ENCODE measurements at regions of chr19 and their contacts with region 1.

Region 1: DNA sequence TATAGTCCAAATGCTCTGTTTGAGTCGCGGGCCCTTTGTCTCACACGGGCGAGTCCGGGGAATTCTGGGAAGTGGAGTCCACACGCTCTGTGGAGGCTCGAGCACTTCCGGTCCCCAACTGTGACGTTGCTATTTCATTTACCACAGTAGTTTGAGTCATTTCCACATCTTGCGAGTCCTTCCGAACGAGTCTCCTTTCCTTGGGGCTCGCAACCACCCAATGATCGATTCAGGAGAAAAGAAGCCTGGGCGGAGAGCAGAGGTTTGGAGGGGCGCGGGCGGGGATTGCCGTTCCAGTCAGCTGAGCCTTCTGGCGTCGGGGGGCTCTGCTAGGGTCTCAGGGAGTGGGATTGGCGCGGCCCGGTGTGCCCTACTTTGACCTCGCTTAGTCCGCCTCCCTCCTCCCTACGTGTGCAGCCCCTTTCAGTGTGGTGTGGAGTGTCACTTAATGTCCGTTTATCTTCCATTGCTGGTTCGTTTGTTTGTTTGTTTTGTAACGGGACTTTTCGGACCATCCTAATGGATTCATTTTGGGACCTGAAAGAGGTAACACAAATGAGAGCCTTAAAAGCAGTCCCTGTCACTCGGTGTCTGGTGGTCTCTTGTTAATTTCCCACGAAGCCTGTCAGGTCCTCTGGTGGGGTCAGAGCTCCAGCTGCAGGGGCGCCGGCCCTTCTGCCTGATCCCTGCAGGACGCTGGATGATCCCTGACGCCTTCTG is at the start of gene ZNF222:
- DNase-seq: peak; percentile 90
- ATAC-seq: peak; percentile 99
- H3K4me3 Mint-ChIP-seq: peak within 1 kb of the TSS; percentile 94
- H3K27ac Mint-ChIP-seq: peak within 1 kb of the TSS; percentile 93
- H3K4me1 Mint-ChIP-seq: peaks cover 20% of the 10 kb centered on the region
- H3K27me3 Mint-ChIP-seq: peaks cover 2% of the 10 kb centered on the region
- total RNA-seq, gene ZNF222: 1.5 to 2.9 TPM

Region 2: GRCh38 chr19:43784981-43785808 is 240.2 kb before region 1 on chr19:
- CTCF ChIA-PET with region 1: no interaction called
- POLR2A ChIA-PET with region 1: no interaction called
- intact Hi-C with region 1: no loop called
- DNase-seq: peak; percentile 76
- ATAC-seq: peak; percentile 11
- H3K4me3 Mint-ChIP-seq: peak overlapping the region; percentile 57
- H3K27ac Mint-ChIP-seq: peak overlapping the region; percentile 81
- H3K4me1 Mint-ChIP-seq: peaks cover 39% of the 10 kb centered on the region
- H3K27me3 Mint-ChIP-seq: peaks cover 7% of the 10 kb centered on the region

Region 3: DNA sequence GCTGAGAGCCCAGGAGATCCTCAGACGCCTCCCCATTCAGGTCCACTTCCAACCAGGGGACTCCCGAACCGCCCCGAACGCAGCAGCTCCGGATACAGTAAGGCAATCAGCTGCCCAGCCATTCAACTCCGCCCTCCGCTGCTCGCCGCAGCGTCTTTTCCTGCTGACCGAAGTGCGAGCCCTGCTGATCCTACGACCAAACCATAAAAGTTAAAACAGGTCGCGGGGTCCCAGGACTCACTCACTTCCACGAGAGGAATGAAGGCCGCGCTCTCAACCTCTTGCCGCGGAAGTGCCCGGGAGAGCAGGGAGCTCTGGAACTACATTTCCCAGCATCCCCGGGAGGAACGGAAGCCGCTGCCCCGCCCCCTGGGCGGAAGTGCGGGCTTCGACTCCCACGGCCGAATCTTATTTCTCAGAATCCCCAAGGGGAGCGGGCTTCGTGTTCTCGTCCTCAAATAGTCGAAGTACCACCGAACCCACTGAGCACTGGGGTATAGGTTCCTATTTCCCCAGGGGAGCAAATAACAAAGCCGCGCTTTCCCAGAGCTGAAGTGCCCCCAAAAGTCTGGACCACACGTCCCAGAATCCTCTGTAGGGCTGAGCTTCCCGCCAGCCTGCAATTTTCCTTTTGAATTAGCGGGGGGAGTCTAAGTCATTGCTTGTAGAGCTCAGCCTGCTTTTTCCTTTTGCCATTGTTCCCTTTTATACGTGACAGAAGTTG is 90.2 kb before region 1 on chr19 and contains the start of gene ZNF45:
- CTCF ChIA-PET with region 1: no interaction called
- POLR2A ChIA-PET with region 1: no interaction called
- intact Hi-C with region 1: loop called in 1 of 2 experiments (anchors 1 kb)
- DNase-seq: peak; percentile 92
- ATAC-seq: peak; percentile 95
- H3K4me3 Mint-ChIP-seq: peak within 1 kb of the TSS; percentile 93
- H3K27ac Mint-ChIP-seq: peak within 1 kb of the TSS; percentile 91
- H3K4me1 Mint-ChIP-seq: peaks cover 22% of the 10 kb centered on the region
- H3K27me3 Mint-ChIP-seq: no peaks in the 10 kb centered on the region
- total RNA-seq, gene ZNF45: 9.6 to 12.1 TPM

Region 4: GRCh38 chr19:43983912-43984686 is 41.3 kb before region 1 on chr19 and contains the start of gene ZNF155:
- CTCF ChIA-PET with region 1: no interaction called
- POLR2A ChIA-PET with region 1: no interaction called
- intact Hi-C with region 1: loop called in 1 of 2 experiments (anchors 1 kb)
- DNase-seq: peak; percentile 82
- ATAC-seq: peak; percentile 97
- H3K4me3 Mint-ChIP-seq: peak within 1 kb of the TSS; percentile 90
- H3K27ac Mint-ChIP-seq: peak within 1 kb of the TSS; percentile 92
- H3K4me1 Mint-ChIP-seq: peaks cover 11% of the 10 kb centered on the region
- H3K27me3 Mint-ChIP-seq: no peaks in the 10 kb centered on the region
- total RNA-seq, gene ZNF155: 4.5 to 6.0 TPM

Region 5: GRCh38 chr19:44051654-44052402 is 26.5 kb after region 1 on chr19 and contains the start of gene ZNF223:
- CTCF ChIA-PET with region 1: no interaction called
- POLR2A ChIA-PET with region 1: no interaction called
- intact Hi-C with region 1: no loop called
- DNase-seq: peak; percentile 63
- ATAC-seq: peak; percentile 78
- H3K4me3 Mint-ChIP-seq: peak within 1 kb of the TSS; percentile 76
- H3K27ac Mint-ChIP-seq: peak within 1 kb of the TSS; percentile 64
- H3K4me1 Mint-ChIP-seq: peaks cover 21% of the 10 kb centered on the region
- H3K27me3 Mint-ChIP-seq: peaks cover 3% of the 10 kb centered on the region
- total RNA-seq, gene ZNF223: 0.63 to 0.82 TPM

Region 6: DNA sequence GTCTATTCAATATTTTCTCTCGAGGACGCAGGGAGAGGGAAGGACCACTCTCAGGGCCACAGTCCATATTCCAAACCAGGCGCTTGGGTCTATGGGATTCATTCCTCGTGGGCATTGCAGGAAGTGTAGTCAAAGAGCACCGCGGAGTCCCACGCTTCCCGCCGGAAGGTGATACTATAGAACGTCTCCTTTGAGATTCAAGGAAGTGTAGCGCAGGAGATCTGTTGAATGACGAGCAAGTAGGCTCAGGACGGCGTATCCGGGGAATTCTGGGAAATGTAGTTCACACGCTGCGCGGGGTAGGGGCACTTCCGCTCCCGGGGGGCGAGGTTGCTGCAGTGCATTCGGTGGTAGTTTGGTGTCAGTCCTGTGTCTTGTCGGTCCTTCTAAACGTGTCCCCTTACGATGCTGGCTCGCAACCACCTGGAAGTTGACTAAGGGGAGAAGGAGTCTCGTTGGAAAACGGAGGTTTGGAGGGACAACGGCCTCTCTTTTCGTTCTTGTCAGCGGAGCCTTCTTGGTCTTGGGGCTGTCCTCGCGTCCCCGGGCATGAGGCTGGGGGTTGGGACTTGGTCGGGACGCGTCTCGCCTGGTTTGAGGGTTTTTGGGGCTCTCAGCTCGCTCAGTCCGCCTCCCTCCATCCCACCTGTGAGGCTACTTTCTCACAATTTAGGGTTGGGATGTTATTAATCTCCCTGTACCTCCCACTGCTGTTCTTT is 46.6 kb after region 1 on chr19 and contains the start of gene ZNF284:
- CTCF ChIA-PET with region 1: no interaction called
- POLR2A ChIA-PET with region 1: no interaction called
- intact Hi-C with region 1: loop called in 1 of 2 experiments (anchors 1 kb)
- DNase-seq: peak; percentile 88
- ATAC-seq: peak; percentile 99
- H3K4me3 Mint-ChIP-seq: peak within 1 kb of the TSS; percentile 83
- H3K27ac Mint-ChIP-seq: peak within 1 kb of the TSS; percentile 78
- H3K4me1 Mint-ChIP-seq: peaks cover 23% of the 10 kb centered on the region
- H3K27me3 Mint-ChIP-seq: peaks cover 2% of the 10 kb centered on the region
- total RNA-seq, gene ZNF284: 2.1 TPM

Region 7: GRCh38 chr19:44141191-44142058 is 116.0 kb after region 1 on chr19 and contains the start of gene ZNF234:
- CTCF ChIA-PET with region 1: interaction called, 3 read pairs
- POLR2A ChIA-PET with region 1: no interaction called
- intact Hi-C with region 1: loop called in 1 of 2 experiments (anchors 1 kb)
- DNase-seq: peak; percentile 82
- ATAC-seq: peak; percentile 92
- H3K4me3 Mint-ChIP-seq: peak within 1 kb of the TSS; percentile 92
- H3K27ac Mint-ChIP-seq: peak within 1 kb of the TSS; percentile 94
- H3K4me1 Mint-ChIP-seq: peaks cover 12% of the 10 kb centered on the region
- H3K27me3 Mint-ChIP-seq: no peaks in the 10 kb centered on the region
- total RNA-seq, gene ZNF234: 7.9 to 10.4 TPM

Region 8: DNA sequence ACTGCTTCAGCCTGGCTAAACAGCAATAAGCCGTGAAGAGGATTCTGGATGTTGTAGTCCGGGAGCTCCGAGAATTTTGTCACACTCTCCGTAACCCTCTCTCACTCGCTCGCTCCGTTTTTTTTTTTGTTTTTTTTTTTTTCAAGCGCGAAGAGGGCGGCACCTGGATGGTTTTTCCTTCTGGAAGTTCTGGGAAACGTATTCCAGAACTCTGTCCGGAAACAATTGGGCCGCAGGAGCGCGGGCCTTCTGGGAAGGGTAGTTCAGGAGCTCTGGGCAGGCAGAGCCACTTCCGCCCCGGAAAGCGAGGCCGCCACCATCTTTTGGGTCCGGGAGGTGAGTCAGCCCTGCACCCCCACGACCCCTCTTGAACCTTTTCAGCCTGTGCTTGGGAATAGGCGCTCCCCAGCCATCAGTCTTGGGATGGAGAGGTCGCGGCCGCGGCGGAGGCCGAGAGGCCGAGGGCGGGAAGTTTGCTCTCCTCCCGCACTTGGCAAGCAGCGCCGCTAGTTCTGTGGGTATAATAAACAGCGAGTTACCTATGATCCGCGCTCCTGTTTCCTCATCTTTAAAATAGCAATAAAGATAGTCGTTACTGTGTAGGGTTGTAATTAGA is 187.0 kb after region 1 on chr19 and contains the start of gene ZNF227:
- CTCF ChIA-PET with region 1: no interaction called
- POLR2A ChIA-PET with region 1: no interaction called
- intact Hi-C with region 1: loop called in 1 of 2 experiments (anchors 1 kb)
- DNase-seq: peak; percentile 90
- ATAC-seq: peak; percentile 98
- H3K4me3 Mint-ChIP-seq: peak within 1 kb of the TSS; percentile 90
- H3K27ac Mint-ChIP-seq: peak within 1 kb of the TSS; percentile 92
- H3K4me1 Mint-ChIP-seq: peaks cover 22% of the 10 kb centered on the region
- H3K27me3 Mint-ChIP-seq: no peaks in the 10 kb centered on the region
- total RNA-seq, gene ZNF227: 19.4 to 20.6 TPM

Region 9: GRCh38 chr19:44356383-44357111 is 331.2 kb after region 1 on chr19 and contains the start of gene ZNF112:
- CTCF ChIA-PET with region 1: no interaction called
- POLR2A ChIA-PET with region 1: no interaction called
- intact Hi-C with region 1: no loop called
- DNase-seq: peak; percentile 32
- ATAC-seq: peak; percentile 47
- H3K4me3 Mint-ChIP-seq: peak within 1 kb of the TSS; percentile 31
- H3K27ac Mint-ChIP-seq: no peak within 1 kb of the TSS
- H3K4me1 Mint-ChIP-seq: peaks cover 7% of the 10 kb centered on the region
- H3K27me3 Mint-ChIP-seq: peaks cover 6% of the 10 kb centered on the region
- total RNA-seq, gene ZNF112: 0.12 to 0.14 TPM

Region 10: DNA sequence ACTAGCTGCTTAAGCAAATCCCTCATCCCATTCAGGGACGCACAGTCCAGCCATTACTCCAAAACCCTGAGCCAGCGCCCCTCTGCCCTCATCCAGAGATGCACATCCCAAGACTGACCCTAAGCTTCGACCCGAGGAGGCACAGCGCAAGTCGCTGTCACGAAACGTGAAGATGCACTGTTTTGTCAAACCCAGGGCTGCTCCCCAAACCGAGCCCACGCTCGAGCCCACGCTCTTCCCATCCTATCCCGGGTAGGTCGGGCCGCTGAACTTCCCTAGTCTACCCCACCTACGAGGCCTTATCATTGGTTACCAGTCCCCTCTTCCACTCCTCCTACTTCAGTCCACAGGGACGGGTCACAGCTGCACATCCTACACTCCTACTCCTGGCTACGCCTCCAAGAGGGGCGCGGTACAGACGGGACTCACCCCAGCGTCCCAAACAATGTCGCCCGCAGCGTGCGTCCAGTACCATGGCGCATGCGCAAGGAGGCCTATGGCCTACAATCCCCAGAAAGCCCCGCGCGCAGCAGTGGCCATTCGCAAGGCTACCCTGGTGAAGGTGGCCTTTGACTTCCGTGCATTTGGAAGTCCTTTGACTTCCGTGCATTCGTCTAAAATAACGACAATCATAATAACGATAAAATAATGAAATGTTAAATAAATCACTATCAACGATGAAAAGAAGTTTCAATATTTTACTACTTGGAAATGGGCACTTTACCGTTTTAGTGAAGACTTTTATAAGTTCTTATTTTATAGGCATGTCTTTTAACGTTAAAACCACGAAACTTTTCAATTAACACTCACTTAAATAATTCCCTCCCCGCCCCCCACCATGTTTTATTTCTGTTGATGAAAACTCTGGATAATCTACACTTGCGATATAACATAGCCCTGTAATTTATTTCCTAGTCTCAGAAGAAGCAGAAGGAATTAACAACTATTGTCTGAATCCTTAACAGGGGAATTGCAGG is 376.1 kb after region 1 on chr19 and contains the start of gene ZNF285:
- CTCF ChIA-PET with region 1: no interaction called
- POLR2A ChIA-PET with region 1: no interaction called
- intact Hi-C with region 1: loop called in 1 of 2 experiments (anchors 2 kb)
- DNase-seq: peak; percentile 91
- ATAC-seq: peak; percentile 99
- H3K4me3 Mint-ChIP-seq: peak within 1 kb of the TSS; percentile 75
- H3K27ac Mint-ChIP-seq: peak within 1 kb of the TSS; percentile 76
- H3K4me1 Mint-ChIP-seq: peaks cover 10% of the 10 kb centered on the region
- H3K27me3 Mint-ChIP-seq: no peaks in the 10 kb centered on the region
- total RNA-seq, gene ZNF285: 1.2 to 1.4 TPM